ENCODE measurements at regions of chr20 and their contacts with region 1.

Region 1: GRCh38 chr20:13105864-13106457 is 97.2 kb downstream of the SPTLC3 start:
- DNase-seq: peak; percentile 19
- H3K4me3 ChIP-seq: no peak overlapping the region
- H3K27ac ChIP-seq: no peak overlapping the region
- H3K4me1 ChIP-seq: no peaks in the 10 kb centered on the region
- H3K27me3 ChIP-seq: no peaks in the 10 kb centered on the region
- CTCF ChIP-seq: peak; percentile 60 to 77 (median 72)
- EP300 ChIP-seq: no peak
- POLR2A ChIP-seq: no peak

Region 2: GRCh38 chr20:12924126-12924525 is 181.8 kb before region 1 on chr20:
- intact Hi-C with region 1: loop called (anchors 5 kb)
- DNase-seq: no peak
- H3K4me3 ChIP-seq: no peak overlapping the region
- H3K27ac ChIP-seq: no peak overlapping the region
- H3K4me1 ChIP-seq: peaks cover 0 to 4% (median 0%) of the 10 kb centered on the region in 4 donors
- H3K27me3 ChIP-seq: peaks cover 0 to 4% (median 0%) of the 10 kb centered on the region in 4 donors
- CTCF ChIP-seq: no peak
- EP300 ChIP-seq: no peak
- POLR2A ChIP-seq: no peak

Region 3: DNA sequence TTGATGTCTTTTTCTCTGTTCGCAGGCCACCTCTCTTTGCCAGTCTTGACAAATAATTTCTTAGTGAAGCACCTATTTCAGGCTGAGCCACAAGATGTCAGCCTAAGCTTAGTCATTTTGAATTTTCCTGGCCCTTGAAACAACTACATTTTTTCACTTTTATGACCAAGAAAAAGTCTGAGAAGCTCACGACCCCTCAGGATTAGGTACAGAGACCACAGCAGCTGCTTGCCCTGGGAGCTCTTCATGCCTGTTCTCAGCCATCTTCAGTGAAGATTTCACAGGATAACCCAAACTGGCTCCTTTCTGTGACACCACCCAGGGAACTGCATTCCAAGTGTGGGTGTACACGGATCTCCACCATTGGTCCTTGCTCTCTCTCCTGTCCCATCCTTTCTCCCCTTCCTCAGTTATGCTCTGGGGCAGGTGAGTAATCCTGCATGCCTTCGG is 135.6 kb before region 1 on chr20:
- intact Hi-C with region 1: loop called (anchors 1 kb)
- DNase-seq: no peak
- H3K4me3 ChIP-seq: no peak overlapping the region
- H3K27ac ChIP-seq: no peak overlapping the region
- H3K4me1 ChIP-seq: no peaks in the 10 kb centered on the region
- H3K27me3 ChIP-seq: no peaks in the 10 kb centered on the region
- CTCF ChIP-seq: peak; percentile 56 to 64 (median 61)
- EP300 ChIP-seq: no peak
- POLR2A ChIP-seq: no peak

Region 4: DNA sequence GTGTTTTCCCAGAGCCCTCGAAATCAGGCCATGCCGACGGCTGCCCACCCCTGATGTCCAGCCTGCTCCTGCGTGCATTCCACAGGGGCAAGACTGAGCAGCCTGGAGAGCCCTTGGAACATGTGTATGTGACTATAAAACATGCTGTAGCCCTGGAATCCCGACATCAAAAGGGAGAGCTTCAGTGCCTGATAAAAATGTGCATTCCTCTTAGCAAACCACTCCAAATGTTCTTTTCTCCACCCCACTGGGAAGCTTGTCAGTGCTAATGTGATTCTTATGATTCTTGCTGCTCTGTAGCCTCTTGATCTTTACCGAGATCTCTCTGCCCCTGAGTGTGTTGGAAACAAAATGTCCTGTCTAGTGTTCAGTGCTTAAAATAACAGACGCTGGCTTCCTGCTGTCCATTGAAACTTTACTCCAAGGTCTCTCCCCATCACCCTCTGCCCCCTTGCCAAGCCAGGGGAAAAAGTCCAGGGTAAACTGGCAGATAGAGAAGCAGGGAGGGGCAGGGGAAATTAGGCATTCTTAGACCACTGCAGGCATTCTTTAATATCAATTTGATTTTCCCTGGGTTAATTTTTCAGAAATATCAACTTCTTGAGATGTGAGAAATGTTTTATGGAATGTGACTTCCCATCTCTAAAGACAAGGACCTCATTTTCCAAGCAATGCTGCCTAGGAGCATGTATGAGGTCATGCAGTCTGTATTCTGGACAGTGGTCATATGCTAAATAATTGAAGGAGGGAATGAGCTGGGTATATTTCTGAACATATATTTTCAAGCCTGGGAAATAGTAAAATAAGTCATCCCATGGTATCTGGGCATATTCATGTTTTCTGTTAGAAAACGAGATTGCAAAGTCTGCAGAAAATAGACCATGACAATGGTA is 41.4 kb after region 1 on chr20:
- intact Hi-C with region 1: no loop called
- DNase-seq: no peak
- H3K4me3 ChIP-seq: no peak overlapping the region
- H3K27ac ChIP-seq: no peak overlapping the region
- H3K4me1 ChIP-seq: no peaks in the 10 kb centered on the region
- H3K27me3 ChIP-seq: no peaks in the 10 kb centered on the region
- CTCF ChIP-seq: no peak
- EP300 ChIP-seq: no peak
- POLR2A ChIP-seq: no peak